Breast epithelium (tissue), 4 donors: ENCODE measurements at regions of chrX and their contacts with region 1.

Region 1: GRCh38 chrX:56860888-56861287 is 131.8 kb downstream of the NBDY start:
- DNase-seq: no peak
- H3K4me3 ChIP-seq: no peak overlapping the region
- H3K27ac ChIP-seq: no peak overlapping the region
- H3K4me1 ChIP-seq: no peaks in the 10 kb centered on the region
- H3K27me3 ChIP-seq: peaks cover 0 to 59% of the 10 kb centered on the region in 2 donors
- CTCF ChIP-seq: no peak
- POLR2A ChIP-seq: no peak

Region 2: GRCh38 chrX:56833626-56834025 is 27.3 kb before region 1 on chrX:
- intact Hi-C with region 1: loop called (anchors 2 kb)
- DNase-seq: no peak
- H3K4me3 ChIP-seq: no peak overlapping the region
- H3K27ac ChIP-seq: no peak overlapping the region
- H3K4me1 ChIP-seq: no peaks in the 10 kb centered on the region
- H3K27me3 ChIP-seq: peaks cover 0 to 27% of the 10 kb centered on the region in 2 donors
- CTCF ChIP-seq: no peak
- POLR2A ChIP-seq: no peak